ENCODE measurements at regions of chr6 and their contacts with region 1.

Region 1: DNA sequence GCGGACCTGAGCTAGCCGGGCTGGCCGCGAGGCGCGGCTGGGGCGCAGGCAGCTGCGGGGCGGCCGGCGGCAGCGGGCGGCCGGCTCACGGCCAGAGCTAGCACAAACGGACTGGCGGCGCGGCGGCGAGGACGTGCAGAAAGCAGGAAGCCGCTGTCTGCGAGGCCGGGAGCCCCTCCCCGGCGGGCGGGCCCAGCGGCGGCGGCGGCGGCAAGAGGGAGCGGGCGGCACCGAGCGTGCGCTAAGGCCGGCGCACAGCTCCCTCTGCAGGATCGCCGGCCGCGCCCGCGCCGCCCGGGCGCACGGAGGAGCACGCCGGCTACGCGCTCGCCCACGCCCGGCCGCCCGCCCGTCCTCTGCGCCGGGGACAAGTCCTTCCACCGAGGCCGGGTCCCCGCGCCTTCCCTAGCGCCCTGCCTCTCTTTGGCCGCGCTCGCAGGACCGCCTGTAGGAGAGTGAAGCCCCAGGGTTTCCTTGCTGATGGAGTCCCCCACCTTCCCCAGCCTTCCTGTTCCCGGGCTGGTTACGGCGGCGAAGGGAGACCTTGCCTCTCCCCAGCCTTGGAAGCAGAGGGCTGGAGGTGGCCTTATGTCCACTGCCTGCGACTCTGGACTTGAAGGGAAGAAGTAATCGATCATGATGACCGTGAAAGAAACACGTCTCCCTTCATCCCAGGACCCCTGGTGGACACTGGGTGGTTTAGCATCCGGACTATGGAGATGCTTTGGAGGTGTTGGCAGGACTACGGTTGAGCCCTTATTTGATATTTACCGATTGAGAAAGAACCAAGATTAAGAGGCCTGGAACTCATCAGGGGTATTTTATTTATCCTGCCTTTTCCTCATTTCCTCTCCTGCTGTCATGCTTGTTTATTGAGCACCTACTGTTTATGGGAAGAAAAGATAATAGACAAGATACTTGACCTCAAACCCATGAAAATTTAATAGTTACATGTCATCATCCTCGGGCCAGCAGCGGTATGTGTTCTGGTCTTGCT is at the start of gene PREP:
- DNase-seq: peak; percentile 41 to 94 (median 86)

Region 2: DNA sequence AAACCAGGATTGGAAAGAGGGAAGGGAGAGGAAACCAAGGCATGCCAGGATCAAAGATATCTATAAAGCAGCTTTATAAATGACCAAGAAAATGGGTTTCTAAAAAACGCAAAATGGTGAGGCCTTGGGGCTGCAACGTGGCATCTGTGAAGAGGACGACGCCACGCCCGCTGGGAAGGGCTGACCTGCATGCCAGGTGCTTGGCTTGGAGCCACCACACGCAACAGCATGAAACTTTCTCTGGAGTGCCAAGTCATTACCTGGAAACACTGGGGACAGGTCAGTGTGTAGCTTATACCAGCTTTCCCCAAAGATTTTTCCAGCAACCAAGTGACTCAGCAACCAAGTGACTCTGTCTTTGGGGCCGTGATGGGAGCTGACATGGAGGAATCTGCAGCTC is 305.9 kb before region 1 on chr6:
- intact Hi-C with region 1: loop called (anchors 10 kb)
- DNase-seq: no peak

Region 3: DNA sequence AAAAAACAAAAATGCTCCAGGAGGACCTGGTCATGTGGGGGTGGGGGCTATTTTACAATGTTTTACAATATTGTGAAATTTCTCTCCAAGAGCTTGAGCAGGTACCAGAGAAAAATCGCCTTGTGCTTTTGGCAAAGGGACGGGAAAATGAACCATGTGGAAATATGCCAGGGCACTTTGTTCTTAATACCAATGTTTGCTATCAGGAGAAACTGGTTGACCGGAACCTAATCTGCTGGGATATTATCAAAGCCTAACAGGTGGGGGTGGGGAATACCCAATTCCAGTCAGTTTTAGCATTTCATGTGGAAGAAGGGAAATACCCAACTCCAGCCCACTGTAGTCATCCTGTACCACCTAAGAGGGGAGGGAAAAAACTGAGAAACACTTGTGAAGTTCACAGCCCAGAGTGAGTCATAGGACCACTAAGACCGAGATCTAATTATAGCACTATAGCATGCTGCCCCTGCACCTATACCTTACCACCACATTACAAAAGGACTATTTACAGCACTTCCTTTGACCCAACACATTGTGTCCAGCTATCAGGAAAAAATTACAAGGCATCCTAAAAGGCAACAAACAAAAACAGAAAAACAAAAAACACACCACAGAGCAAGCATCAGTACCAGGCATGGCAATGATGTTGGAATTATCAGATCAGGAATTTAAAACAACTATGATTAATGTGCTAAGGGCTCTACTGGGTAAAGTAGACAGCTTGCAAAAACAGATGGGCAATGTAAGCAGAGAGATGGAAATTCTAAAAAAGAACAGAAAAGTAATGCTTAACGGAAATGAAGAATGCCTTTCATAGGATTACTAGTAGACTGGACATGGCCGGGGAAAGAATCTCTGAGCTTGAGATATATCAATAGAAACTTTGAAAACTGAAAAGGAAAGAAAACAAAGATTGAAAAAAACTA is 139.3 kb before region 1 on chr6:
- intact Hi-C with region 1: no loop called
- DNase-seq: no peak

Region 4: DNA sequence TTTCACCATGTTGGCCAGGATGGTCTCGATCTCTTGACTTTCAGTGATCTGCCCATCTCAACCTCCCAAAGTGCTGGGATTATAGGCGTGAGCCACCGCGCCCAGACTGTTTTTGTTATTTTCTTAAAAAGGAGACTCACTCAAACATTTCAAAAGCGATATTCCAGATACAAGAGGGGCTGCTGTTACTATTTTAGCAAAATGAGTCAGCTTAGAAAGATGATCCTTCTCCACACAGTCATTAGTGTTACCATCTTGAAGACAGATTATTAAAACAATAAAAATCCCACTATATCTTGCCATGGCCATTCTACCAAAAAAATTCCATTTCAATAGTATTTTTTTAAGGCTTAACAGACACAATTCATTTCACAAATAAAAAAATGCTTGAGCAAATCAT is 103.1 kb before region 1 on chr6:
- intact Hi-C with region 1: no loop called
- DNase-seq: no peak

Region 5: DNA sequence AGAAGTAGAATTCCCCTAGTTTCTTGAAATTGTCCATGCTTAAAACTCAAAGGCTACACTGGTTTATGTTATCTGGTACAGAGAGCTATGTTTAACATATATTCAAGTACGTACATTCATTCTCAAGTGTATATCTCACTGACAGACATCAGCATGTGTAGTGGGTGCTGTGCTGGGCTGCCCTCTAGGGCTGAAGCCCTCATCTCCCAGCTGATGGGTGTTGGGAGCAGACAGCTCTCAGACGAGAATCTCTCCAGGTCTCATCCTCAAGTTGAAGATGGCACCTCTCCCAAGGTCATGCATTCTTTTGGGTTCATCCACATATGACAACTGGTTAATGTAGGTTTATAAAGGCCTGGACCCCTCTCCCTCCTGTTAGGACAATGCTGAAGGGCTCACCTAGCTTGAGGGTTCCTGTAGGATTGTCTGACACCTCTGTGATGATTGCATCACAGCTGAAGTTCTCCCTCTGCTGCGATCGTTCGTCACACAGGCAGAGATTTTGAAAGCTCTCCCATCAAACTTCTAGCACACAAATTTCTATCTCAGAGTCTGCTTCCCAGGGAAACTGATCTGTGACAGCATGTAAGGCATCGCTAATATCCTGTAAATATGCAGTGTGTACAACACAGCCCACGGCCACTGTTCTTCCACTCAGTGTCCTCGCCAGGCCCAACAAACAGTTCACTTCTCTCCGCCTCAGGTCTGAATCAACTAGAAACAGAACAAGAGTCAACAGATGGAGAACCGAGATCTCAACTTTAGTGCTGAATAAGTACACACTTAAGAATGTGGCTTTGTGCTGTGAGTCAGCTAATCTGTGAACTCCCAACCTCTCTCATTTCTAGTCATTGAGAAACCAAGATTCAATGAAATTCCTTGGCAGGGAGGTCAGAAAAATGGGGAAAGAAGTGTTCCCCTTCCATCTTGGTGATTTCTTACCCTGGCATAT is 43.5 kb before region 1 on chr6:
- intact Hi-C with region 1: no loop called
- DNase-seq: no peak

Region 6: DNA sequence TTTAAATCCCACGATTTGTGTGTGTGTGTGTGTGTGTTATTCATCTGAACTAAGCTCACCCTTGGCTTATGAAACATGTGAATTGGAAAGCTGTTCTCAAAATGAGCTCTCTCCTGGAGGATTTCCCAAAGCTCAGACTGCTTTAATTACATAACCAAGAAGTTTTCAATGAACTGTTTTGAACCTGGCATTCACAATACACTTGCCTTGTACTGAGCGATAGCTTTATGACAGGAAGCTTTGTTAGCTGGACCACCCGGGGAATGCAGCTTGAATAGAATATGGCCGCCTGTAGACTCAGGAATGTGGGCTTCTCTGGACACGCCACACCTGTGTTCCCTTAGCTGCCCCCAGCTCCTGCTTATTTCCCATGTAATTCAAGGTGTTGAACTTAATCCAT is 71.0 kb after region 1 on chr6:
- intact Hi-C with region 1: no loop called
- DNase-seq: peak in 1 of 42 donors; percentile 3